H1 (cell line): ENCODE measurements at regions of chr5 and their contacts with region 1.

Region 1: DNA sequence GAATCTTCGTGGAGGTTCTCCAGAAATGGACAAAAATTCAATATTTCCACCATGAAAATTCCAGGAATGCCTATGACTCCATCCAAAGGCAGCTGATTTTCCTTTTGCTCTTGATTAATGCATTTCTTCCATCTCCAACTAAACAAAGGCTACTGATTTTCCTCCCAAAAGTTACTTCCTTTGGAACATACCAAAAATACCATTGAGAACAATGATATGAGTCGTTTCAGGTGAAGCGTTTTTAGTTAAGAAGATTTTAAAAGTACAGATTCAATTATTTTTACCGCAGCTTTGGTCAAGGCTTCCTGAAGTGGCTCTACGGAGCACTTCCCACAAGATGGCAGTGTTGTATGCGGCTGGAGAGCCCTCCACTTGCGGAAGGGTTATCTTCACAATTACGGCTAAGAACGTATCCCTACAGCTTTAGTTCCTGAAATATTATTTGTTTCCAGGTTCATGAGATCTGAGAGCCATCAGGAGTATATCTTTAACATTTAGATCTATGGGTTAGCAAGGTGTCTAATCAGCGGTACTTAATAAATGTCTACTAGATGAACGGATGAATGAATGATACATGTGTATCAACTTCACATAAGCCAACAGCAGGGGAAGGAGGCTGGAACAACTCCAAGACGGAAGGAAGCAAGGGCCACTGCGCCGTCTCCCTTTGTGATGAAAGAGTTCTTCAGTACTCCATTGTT is 35.9 kb upstream of the ARSB start:
- DNase-seq: peak; percentile 33 to 61
- H3K4me3 ChIP-seq: peak overlapping the region in 1 of 4 experiments; percentile 42; a peak in 1 of 8 replicates
- H3K27ac ChIP-seq: no peak overlapping the region
- H3K4me1 ChIP-seq: peaks cover 3 to 14% (median 6%) of the 10 kb centered on the region in 4 experiments; a peak in 5 of 7 replicates
- H3K27me3 ChIP-seq: no peaks in the 10 kb centered on the region
- CTCF ChIP-seq: peak; percentile 70 to 80 (median 80)
- EP300 ChIP-seq: no peak
- POLR2A ChIP-seq: no peak
- RAD21 ChIP-seq: peak; percentile 89 to 90

Region 2: GRCh38 chr5:78829811-78830527 is 191.0 kb before region 1 on chr5:
- CTCF ChIA-PET with region 1: no interaction called
- POLR2A ChIA-PET with region 1: no interaction called
- DNase-seq: no peak
- H3K4me3 ChIP-seq: no peak overlapping the region
- H3K27ac ChIP-seq: no peak overlapping the region
- H3K4me1 ChIP-seq: 0 out of 7 replicates have a peak, but pooled peaks cover 0 to 2% (median 0%) of the 10 kb centered on the region in 4 experiments
- H3K27me3 ChIP-seq: no peaks in the 10 kb centered on the region
- CTCF ChIP-seq: no peak
- EP300 ChIP-seq: no peak
- POLR2A ChIP-seq: no peak
- RAD21 ChIP-seq: no peak

Region 3: GRCh38 chr5:78899922-78900362 is 121.1 kb before region 1 on chr5:
- CTCF ChIA-PET with region 1: interaction called, 69 read pairs
- POLR2A ChIA-PET with region 1: no interaction called
- DNase-seq: peak; percentile 53 to 79
- H3K4me3 ChIP-seq: no peak overlapping the region
- H3K27ac ChIP-seq: no peak overlapping the region
- H3K4me1 ChIP-seq: peaks cover 0 to 3% (median 0%) of the 10 kb centered on the region in 4 experiments; a peak in 1 of 7 replicates
- H3K27me3 ChIP-seq: no peaks in the 10 kb centered on the region
- CTCF ChIP-seq: peak; percentile 42 to 91 (median 82)
- EP300 ChIP-seq: no peak
- POLR2A ChIP-seq: no peak
- RAD21 ChIP-seq: peak; percentile 97 to 99

Region 4: GRCh38 chr5:79048437-79048836 is 27.4 kb after region 1 on chr5:
- CTCF ChIA-PET with region 1: interaction called, 20 read pairs
- POLR2A ChIA-PET with region 1: no interaction called
- DNase-seq: no peak
- H3K4me3 ChIP-seq: no peak overlapping the region
- H3K27ac ChIP-seq: no peak overlapping the region
- H3K4me1 ChIP-seq: no peaks in the 10 kb centered on the region
- H3K27me3 ChIP-seq: no peaks in the 10 kb centered on the region
- CTCF ChIP-seq: no peak
- EP300 ChIP-seq: no peak
- POLR2A ChIP-seq: no peak
- RAD21 ChIP-seq: no peak

Region 5: DNA sequence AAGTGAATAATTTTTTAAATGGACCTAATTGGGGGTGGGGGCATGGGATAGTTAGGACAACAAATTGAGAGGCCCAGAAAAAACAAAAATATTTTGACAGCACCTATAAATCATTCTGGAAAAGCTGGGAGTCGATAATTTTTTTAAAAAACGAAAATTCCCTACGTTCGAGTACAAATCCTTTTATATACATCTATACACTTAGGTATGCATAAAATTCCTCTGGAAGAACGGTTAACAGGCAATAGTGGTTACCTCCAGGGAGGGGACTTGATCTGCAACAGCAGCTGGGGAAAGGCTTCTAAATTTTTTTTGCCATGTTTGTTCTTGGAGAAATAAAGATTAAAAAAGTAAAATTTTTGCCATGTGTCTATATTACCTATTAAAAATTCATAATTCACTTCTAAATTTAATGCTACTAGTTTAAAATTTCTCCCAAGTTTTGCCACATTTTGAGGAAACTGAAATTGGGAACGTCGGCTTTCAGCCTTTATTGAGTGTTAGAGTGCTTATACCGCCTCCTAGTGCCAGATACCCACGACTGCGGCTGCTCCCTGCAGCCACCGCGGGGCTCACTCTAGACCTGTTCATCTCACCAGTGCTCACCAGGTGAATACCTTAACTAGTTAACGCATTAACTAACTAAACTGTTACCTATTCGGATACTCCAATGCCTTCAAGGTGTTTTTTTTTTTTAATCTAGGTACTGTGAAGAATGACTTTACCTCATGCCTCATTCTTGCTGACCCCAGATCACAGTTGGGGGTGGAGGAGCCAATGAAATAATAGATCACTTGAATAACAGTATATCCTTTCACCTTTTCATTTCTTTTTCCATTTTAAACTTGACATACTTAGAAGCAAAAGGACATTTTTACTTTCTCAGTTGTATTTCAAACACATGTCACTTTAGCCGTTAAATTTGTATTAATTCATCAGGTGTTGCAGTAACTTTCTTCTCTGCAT is 88.8 kb after region 1 on chr5:
- CTCF ChIA-PET with region 1: interaction called, 49 read pairs
- POLR2A ChIA-PET with region 1: no interaction called
- DNase-seq: peak in 1 of 2 experiments; percentile 60
- H3K4me3 ChIP-seq: no peak overlapping the region
- H3K27ac ChIP-seq: no peak overlapping the region
- H3K4me1 ChIP-seq: no peaks in the 10 kb centered on the region
- H3K27me3 ChIP-seq: peaks cover 15 to 27% (median 22%) of the 10 kb centered on the region in 4 experiments
- CTCF ChIP-seq: peak; percentile 76 to 82 (median 77)
- EP300 ChIP-seq: no peak
- POLR2A ChIP-seq: no peak
- RAD21 ChIP-seq: peak; percentile 65 to 78

Region 6: DNA sequence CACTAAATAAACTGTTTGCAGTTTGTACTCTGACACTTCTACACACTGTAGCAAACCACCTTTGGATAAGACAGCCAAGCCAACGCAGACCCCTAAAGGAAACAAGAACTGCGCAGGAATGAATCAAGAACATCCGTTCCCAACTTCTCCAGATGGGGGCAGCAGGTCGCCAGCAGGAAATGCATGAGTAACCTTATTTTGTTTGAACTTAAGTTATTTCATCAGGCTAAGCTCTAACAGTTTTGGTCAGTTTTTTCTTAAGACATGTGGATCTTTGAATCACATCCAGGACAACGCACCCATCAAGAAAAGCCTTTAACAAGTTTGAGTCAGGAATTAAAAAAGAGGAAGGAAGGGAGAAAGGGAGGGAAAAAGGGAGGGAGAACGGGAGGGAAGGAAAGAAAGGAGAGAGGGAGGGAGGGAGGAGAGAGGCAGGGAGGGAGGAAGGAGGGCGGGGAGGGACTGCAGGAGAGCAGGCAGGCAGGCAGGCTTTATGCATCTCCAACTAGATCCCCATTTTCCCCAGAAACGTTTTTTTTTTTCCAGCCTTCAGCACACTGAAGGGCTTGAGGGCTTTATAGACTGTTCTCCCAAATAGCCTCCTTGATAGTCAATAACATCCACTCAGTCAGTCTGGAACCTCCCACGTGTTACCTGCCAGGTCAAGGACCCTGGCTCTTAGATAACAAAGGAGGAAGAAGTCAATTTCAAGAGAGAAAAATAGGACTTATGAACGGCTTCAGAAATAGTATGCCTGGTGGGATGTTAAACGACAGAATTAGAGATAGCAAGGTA is 112.8 kb after region 1 on chr5:
- CTCF ChIA-PET with region 1: interaction called, 243 read pairs
- POLR2A ChIA-PET with region 1: interaction called, 3 read pairs
- DNase-seq: peak; percentile 58 to 79
- H3K4me3 ChIP-seq: peak overlapping the region; percentile 12 to 54 (median 29); a peak in 7 of 8 replicates
- H3K27ac ChIP-seq: no peak overlapping the region
- H3K4me1 ChIP-seq: peaks cover 0 to 7% (median 1%) of the 10 kb centered on the region in 4 experiments; a peak in 5 of 7 replicates
- H3K27me3 ChIP-seq: no peaks in the 10 kb centered on the region
- CTCF ChIP-seq: peak; percentile 68 to 86 (median 76)
- EP300 ChIP-seq: no peak
- POLR2A ChIP-seq: no peak
- RAD21 ChIP-seq: peak; percentile 73 to 78